ENCODE measurements at regions of chr7 and their contacts with region 1.

Region 1: DNA sequence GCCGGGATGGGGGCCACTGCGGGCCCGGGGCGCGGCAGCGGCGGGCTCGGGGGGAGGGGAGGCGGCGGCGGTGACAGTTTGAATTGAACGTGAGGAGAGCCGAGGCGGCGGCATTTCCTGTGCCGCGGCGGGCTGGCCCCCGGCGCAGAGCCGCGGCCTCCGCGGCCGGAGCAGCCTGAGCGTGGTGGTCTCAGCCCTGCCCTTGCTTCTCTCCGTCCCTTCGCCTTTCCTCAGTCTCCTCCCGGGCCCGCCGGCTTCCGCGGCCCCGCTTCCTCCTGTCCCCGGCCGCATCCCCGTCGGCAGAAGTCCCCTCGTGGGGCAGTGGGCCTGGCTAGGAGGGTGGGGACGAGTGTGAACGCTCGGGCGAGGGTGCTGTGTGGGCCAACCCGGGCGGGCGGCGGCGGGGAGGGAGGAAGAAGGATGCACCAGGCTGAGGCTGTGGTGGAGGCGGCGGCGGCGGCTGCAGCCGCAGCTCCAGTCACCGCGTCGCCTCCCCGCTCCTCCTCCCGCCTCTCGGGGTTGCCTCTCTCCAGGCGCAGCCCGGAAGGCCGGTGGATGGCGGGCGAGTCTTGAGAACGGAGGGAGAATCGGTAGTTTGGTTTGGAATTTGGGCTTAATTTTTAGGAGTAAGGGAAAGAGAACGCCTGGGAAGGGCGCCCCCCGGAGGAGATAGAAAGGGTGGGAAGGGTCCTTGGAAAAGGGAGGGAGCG is 690 bp downstream of the SEPTIN7 start:
- DNase-seq: peak; percentile 90
- ATAC-seq: peak; percentile 55

Region 2: GRCh38 chr7:35694781-35695472 is 106.6 kb before region 1 on chr7 and contains the start of gene HERPUD2:
- intact Hi-C with region 1: no loop called
- DNase-seq: peak; percentile 98
- ATAC-seq: peak; percentile 98
- total RNA-seq, gene HERPUD2: 17.9 TPM

Region 3: GRCh38 chr7:35705932-35706461 is 95.5 kb before region 1 on chr7:
- intact Hi-C with region 1: no loop called
- DNase-seq: no peak
- ATAC-seq: no peak

Region 4: DNA sequence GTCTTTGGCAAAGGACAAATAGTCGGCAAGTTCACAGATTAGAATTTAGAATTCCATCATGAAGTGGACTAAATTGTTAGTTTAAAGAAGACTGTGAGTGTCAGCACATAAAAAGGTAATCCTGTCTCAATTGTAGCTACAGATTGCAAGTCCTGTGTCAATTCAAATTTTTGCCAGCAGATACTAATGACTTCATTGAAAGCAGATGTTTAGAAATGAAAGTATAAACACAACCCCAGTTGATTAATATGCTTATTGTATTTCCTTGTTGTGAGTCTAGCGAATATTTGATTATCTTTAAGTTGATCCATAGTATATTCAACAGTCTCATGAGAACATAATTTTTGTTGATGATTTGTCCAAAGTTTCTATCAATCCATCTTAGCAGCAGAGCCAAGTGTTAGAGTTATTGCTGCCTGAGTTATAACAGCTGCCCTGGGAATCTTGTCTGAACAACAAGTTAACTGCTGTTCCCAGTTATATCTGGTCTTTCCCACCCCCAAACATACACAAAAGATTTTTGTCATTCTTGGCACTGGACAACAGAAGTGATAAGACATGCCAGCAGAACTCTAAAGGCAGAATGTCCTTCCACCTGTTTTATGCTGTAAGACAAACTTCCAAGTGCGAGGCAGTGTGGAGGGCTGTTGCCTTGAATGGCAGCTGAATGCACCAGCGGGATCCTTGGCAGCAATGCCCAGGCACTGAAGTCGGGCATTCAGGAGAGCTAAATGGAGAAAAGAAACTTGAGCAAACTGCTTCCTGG is 85.3 kb before region 1 on chr7:
- intact Hi-C with region 1: loop called (anchors 2 kb)
- DNase-seq: no peak
- ATAC-seq: peak; percentile 54

Region 5: GRCh38 chr7:35758421-35758820 is 43.1 kb before region 1 on chr7:
- intact Hi-C with region 1: loop called (anchors 5 kb)
- DNase-seq: no peak
- ATAC-seq: no peak

Region 6: DNA sequence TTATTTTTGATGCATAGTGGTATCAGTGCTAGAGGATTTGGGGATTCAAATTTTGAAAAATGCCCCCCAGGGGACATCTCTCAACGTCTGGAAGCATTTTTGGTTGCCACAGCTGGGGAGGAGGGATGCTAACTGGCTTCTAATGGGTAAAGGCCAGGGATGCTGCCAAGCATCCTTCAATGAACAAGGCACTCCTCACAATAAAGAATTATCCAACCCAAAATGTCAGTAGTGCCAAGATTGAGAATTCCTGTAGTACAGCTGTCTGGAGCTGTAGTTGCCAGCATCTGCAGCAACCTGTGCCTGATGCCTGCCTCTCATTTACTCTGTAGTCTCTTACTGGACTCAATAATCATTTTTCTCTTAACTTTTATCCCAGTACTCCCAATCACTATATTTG is 52.8 kb after region 1 on chr7:
- intact Hi-C with region 1: loop called (anchors 10 kb)
- DNase-seq: no peak
- ATAC-seq: no peak

Region 7: DNA sequence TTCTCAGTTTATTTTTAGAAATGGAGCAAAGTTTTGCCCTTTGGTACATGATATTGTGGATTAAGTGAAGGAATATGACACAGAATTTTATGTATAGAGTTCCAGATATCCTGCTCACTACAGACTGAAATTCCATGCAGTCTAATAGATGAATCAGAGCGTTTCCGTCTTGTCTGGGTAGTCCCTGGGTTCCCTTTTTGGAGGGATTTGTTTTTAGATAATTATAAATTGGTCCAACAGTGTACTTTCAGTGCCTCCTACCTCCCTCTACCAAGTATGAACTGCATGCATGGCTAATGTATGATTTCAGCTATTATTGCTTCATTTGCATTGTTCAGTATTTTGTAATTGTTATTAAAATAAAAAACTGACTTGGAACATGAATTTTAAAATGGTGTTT is 73.7 kb after region 1 on chr7:
- intact Hi-C with region 1: loop called (anchors 5 kb)
- DNase-seq: no peak
- ATAC-seq: no peak

Region 8: DNA sequence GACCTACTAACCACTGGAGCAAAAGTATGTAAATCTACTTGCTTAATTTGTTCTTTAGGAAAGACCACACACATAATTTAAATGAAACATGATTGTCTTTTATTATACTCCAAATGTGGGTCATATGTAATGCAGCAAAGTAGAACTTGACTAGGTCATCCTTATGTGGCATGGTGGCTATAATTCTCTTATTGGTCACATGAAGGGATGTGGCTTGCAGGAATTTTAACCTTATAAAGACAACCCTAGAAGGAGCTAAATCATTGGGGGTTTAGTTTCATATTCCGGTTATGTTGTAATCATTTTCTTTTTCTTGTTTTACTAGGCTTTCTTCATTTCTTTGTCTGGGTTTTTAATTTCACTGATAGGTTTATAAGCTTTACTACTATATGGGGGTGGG is 93.2 kb after region 1 on chr7:
- intact Hi-C with region 1: loop called (anchors 5 kb)
- DNase-seq: no peak
- ATAC-seq: no peak

Region 9: GRCh38 chr7:35906191-35906908 is 104.8 kb after region 1 on chr7:
- intact Hi-C with region 1: loop called (anchors 5 kb)
- DNase-seq: no peak
- ATAC-seq: peak; percentile 83

Measured in Right ventricle myocardium inferior (tissue), 1 donor.